SK-N-SH (cell line): ENCODE measurements at regions of chr19 and their contacts with region 1.

Region 1: DNA sequence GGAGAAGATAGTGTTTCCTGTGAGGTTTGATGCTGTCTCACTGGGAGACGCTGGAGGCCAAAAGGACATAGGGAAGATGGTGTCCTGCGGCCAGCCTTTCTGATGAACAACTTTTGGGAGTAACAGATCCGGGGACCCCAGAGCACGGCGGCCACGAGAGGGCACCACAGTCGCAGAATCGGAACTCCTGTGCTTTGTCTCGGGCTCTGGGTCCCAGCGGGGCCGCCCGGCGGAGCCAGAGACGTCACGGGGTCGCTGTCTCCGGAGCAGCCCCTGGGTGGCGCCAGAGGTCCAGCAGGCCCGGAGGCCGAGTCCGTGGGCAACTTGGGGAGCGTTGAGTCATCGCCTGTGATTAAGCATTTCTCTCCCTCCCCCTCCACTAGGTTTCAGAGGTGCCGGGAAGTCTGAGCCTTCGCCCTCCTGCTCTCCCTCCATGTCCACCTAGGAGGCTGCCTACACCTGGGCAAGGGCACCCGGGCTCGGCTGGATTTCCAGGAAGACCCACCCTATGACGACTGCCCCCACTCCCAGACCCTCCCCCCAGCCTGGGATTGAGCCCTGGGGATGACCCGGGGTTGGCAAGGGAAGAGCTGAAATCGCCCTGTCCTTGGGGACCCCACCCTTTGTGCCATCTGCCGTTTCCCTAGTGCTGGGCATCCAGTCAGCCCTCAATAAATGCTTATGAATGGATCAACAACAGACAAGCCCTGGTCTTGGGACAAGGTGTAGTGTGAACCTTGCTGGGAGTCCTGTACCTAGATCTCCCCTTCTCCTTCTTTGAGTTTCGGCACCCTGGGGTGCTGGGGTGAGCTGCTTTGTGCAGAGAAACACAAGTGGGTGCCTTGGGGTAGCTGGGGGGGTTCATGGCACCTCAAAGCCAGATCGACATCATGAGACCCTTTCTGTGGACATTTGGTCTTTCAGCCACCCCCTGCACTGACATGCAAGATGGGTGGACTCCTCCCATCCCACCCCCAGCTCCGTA is 3.4 kb downstream of the NANOS3 start:
- DNase-seq: peak; percentile 98
- H3K4me3 ChIP-seq: peak overlapping the region; percentile 30 to 48; a peak in 3 of 4 replicates
- H3K27ac ChIP-seq: peak overlapping the region; percentile 56 to 58; a peak in 3 of 4 replicates
- H3K4me1 ChIP-seq: peaks cover 7 to 22% of the 10 kb centered on the region in 2 experiments; a peak in 3 of 4 replicates
- H3K27me3 ChIP-seq: no peaks in the 10 kb centered on the region
- CTCF ChIP-seq: peak; percentile 98
- EP300 ChIP-seq: no peak; a peak in 1 of 4 replicates
- RAD21 ChIP-seq: peak; percentile 97

Region 2: DNA sequence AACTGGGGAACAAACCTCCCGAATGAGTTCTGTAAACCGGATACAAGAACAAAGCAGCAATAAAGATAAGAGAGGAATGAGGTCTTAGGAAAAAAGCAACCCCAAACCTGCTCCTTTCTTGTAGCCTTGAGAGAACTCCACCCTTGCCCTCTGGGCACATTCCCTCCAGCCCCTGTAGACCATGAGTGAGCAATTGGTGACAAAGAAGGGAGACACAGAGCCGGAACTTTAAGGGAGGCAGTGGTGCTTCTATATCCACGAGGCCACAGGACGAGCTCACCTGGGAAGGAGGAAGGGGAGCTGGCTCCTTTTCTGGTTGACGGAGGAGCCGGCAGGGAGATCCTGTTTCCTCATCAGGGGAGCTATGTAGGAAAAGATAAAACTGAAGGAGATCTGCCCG is 12.5 kb after region 1 on chr19:
- CTCF ChIA-PET with region 1: interaction called, 11 read pairs
- POLR2A ChIA-PET with region 1: interaction called, 3 read pairs
- DNase-seq: no peak
- H3K4me3 ChIP-seq: no peak overlapping the region
- H3K27ac ChIP-seq: no peak overlapping the region
- H3K4me1 ChIP-seq: no peaks in the 10 kb centered on the region
- H3K27me3 ChIP-seq: no peaks in the 10 kb centered on the region
- CTCF ChIP-seq: no peak
- EP300 ChIP-seq: no peak
- RAD21 ChIP-seq: no peak

Region 3: GRCh38 chr19:13938301-13939064 is 58.1 kb after region 1 on chr19 and contains the start of gene PODNL1:
- CTCF ChIA-PET with region 1: interaction called, 17 read pairs
- POLR2A ChIA-PET with region 1: interaction called, 4 read pairs
- DNase-seq: peak; percentile 86
- H3K4me3 ChIP-seq: peak within 1 kb of the TSS; percentile 24 to 57
- H3K27ac ChIP-seq: peak within 1 kb of the TSS; percentile 29 to 86; a peak in 3 of 4 replicates
- H3K4me1 ChIP-seq: peaks cover 0 to 26% of the 10 kb centered on the region in 2 experiments; a peak in 1 of 4 replicates
- H3K27me3 ChIP-seq: no peaks in the 10 kb centered on the region
- CTCF ChIP-seq: no peak
- EP300 ChIP-seq: peak in 1 of 2 experiments; percentile 24; a peak in 1 of 4 replicates
- RAD21 ChIP-seq: peak; percentile 24; the same call in 1 of the 2 replicates
- polyA plus RNA-seq, gene PODNL1: 4.2 and 7.5 TPM in 2 replicates

Region 4: GRCh38 chr19:13959962-13960862 is 79.9 kb after region 1 on chr19:
- CTCF ChIA-PET with region 1: interaction called, 10 read pairs
- POLR2A ChIA-PET with region 1: no interaction called
- DNase-seq: peak; percentile 84
- H3K4me3 ChIP-seq: no peak overlapping the region
- H3K27ac ChIP-seq: no peak overlapping the region
- H3K4me1 ChIP-seq: peaks cover 0 to 9% of the 10 kb centered on the region in 2 experiments; a peak in 1 of 4 replicates
- H3K27me3 ChIP-seq: no peaks in the 10 kb centered on the region
- CTCF ChIP-seq: peak; percentile 42
- EP300 ChIP-seq: no peak
- RAD21 ChIP-seq: no peak

Region 5: GRCh38 chr19:14048443-14049153 is 168.2 kb after region 1 on chr19:
- CTCF ChIA-PET with region 1: interaction called, 30 read pairs
- POLR2A ChIA-PET with region 1: interaction called, 3 read pairs
- DNase-seq: peak; percentile 83
- H3K4me3 ChIP-seq: no peak overlapping the region
- H3K27ac ChIP-seq: no peak overlapping the region
- H3K4me1 ChIP-seq: no peaks in the 10 kb centered on the region
- H3K27me3 ChIP-seq: no peaks in the 10 kb centered on the region
- CTCF ChIP-seq: peak; percentile 79
- EP300 ChIP-seq: no peak
- RAD21 ChIP-seq: peak; percentile 52

Region 6: DNA sequence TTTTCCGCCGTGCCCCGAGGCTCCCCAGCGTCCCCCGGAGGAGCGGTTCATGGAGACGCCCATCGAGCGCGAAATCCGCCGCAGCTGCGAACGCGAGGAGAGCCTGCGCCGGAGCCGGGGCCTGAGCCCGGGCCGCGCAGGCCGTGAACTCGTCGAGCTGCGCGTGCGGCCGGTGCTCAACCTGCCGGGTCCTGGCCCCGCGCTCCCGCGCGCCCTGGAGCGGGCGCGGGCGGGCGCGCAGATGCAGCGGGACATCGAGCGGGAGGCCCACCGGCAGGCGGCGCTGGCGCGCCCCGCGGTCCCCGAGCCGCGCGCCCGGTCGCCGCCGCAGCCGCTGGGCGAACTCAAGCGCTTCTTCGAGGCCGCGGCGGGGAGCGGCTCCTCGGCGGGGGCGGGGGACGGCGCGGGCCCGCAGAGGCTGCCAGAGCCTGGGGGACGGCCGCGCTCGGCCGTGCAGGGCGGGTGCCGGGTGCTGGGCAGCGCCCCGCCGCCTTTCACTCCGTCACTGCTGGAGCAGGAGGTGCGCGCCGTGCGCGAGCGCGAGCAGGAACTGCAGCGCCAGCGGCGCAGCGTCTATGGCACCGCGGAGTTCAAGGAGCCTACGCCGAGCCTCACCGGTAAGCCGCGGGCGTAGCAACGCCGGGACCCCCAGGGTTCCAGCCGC is 193.0 kb after region 1 on chr19:
- CTCF ChIA-PET with region 1: interaction called, 146 read pairs
- POLR2A ChIA-PET with region 1: interaction called, 6 read pairs
- DNase-seq: peak; percentile 92
- H3K4me3 ChIP-seq: peak overlapping the region; percentile 60 to 85
- H3K27ac ChIP-seq: peak overlapping the region; percentile 24 to 50; a peak in 3 of 4 replicates
- H3K4me1 ChIP-seq: peaks cover 0 to 14% of the 10 kb centered on the region in 2 experiments; a peak in 1 of 4 replicates
- H3K27me3 ChIP-seq: no peaks in the 10 kb centered on the region
- CTCF ChIP-seq: peak; percentile 38
- EP300 ChIP-seq: no peak
- RAD21 ChIP-seq: no peak